ENCODE measurements at regions of chr17 and their contacts with region 1.

Region 1: GRCh38 chr17:74786431-74787055 is 10.4 kb upstream of the NAT9 start:
- H3K4me3 ChIP-seq: no peak overlapping the region
- H3K27ac ChIP-seq: no peak overlapping the region
- H3K4me1 ChIP-seq: no peaks in the 10 kb centered on the region
- CTCF ChIP-seq: no peak

Region 2: DNA sequence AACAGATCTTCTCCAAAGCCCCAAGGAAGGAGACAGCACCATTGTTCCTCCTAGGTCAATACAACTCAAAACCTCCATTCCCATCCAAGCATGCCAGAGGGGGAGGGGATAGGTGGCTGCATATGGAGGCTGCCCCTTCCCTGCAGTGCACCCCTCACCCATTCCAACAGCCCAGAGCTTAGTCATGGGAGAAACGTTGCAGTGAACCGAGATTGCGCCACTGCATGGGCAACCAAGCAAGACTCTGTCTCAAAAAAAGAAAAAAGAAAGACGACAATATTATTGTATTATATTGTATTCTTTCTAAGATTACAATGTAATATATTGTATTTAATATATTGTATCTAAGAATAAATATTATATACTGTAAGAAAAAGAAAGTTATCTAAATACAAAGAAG is 126.6 kb before region 1 on chr17:
- CTCF ChIA-PET with region 1: interaction called, 13 read pairs
- POLR2A ChIA-PET with region 1: no interaction called
- H3K4me3 ChIP-seq: no peak overlapping the region
- H3K27ac ChIP-seq: no peak overlapping the region
- H3K4me1 ChIP-seq: no peaks in the 10 kb centered on the region
- CTCF ChIP-seq: no peak

Region 3: GRCh38 chr17:74759243-74759801 is 27.2 kb before region 1 on chr17:
- CTCF ChIA-PET with region 1: interaction called, 15 read pairs
- POLR2A ChIA-PET with region 1: no interaction called
- H3K4me3 ChIP-seq: no peak overlapping the region
- H3K27ac ChIP-seq: no peak overlapping the region
- H3K4me1 ChIP-seq: peaks cover 14% of the 10 kb centered on the region
- CTCF ChIP-seq: no peak

Region 4: GRCh38 chr17:74801896-74802295 is 15.4 kb after region 1 on chr17:
- CTCF ChIA-PET with region 1: interaction called, 41 read pairs
- POLR2A ChIA-PET with region 1: no interaction called
- H3K4me3 ChIP-seq: no peak overlapping the region
- H3K27ac ChIP-seq: no peak overlapping the region
- H3K4me1 ChIP-seq: no peaks in the 10 kb centered on the region
- CTCF ChIP-seq: no peak

Region 5: GRCh38 chr17:74825952-74826719 is 39.6 kb after region 1 on chr17:
- CTCF ChIA-PET with region 1: interaction called, 13 read pairs
- POLR2A ChIA-PET with region 1: no interaction called
- H3K4me3 ChIP-seq: no peak overlapping the region
- H3K27ac ChIP-seq: no peak overlapping the region
- H3K4me1 ChIP-seq: no peaks in the 10 kb centered on the region
- CTCF ChIP-seq: no peak

Region 6: DNA sequence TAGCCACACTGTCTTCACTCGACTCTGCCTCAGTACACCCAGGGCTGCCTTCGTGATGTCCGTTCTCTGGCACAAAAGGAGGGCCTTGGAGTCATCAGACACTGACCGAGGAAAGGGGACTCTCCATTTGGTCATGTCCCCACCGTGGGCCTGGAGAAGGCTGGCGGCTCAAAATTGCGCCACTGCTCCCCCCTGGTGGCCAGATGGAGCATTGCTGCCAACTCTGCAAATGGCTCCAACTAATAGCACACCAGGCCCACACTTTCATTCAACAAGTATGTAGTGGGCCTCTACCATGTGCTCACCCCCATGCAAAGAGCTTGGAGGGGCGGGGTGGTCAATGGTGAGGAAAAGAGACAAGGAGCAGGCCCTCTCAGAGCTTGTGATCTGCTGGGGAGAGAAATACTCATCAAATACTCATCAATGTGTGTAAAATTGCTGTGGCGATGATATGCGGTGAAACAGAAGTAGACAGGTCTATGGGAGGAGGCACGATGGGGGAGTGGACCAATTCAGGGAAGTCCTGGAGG is 78.4 kb after region 1 on chr17:
- CTCF ChIA-PET with region 1: interaction called, 338 read pairs
- POLR2A ChIA-PET with region 1: no interaction called
- H3K4me3 ChIP-seq: no peak overlapping the region
- H3K27ac ChIP-seq: no peak overlapping the region
- H3K4me1 ChIP-seq: 0 out of 2 replicates have a peak, but pooled peaks cover 2% of the 10 kb centered on the region
- CTCF ChIP-seq: peak; percentile 85

Region 7: DNA sequence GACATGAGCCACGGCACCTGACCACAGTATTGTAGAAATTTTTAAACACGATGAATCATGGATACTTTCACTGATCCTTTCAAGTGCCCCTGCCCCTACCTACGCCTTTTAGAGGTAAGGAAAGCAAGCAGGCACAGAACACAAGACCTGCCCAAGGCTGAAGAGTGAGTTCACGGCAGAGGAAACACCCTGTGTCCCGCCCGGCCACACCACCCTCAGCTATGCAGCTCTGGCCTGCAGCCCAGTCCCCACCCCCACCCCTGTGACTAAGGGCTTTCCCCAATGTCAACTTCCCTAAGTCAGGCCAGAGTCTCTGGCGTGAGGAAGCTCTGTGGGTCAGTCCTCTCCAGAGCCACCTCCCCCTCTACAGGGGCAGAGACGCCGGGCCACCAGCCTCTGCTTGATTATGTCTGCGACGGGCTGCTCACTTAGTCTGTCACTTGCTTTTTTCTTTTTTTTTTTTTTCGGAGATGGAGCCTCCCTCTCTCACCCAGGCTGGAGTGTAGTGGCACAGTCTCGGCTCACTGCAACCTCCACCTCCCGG is 309.6 kb after region 1 on chr17:
- CTCF ChIA-PET with region 1: no interaction called
- POLR2A ChIA-PET with region 1: no interaction called
- H3K4me3 ChIP-seq: no peak overlapping the region
- H3K27ac ChIP-seq: no peak overlapping the region
- H3K4me1 ChIP-seq: peaks cover under 1% of the 10 kb centered on the region; the same call in 1 of the 2 replicates
- CTCF ChIP-seq: no peak